Posterior cingulate gyrus (tissue), 11 donors: ENCODE measurements at regions of chr13 and their contacts with region 1.

Region 1: DNA sequence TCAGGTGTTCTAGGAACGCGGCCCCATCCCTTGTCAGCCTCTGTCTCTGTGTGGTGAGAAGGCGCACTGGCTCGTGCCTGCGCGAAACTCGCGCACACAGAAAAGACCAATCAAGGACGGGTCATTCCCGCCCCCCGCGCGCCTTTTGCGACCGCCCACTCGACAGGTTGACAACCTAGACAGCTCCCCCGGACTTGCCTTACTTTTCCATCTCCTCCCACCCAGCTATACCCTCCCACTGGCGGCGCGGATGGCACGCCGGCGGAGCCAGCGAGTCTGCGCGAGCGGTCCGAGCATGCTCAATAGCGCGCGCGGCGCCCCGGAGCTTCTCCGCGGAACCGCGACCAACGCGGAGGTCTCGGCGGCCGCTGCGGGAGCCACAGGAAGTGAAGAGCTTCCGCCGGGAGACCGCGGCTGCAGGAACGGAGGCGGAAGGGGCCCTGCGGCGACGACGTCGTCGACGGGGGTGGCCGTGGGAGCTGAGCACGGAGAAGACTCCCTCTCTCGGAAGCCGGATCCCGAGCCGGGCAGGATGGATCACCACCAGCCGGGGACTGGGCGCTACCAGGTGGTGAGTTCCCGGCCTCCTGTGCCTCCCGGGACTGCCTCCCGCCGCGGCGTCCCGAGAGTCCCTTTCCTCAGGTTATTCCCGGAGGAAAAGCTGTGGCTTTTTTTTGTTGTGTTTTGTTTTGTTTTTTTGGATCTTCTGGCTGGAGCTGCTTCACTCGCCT is at the start of gene NDFIP2:
- DNase-seq: peak; percentile 80 to 97 (median 82)

Region 2: GRCh38 chr13:79056706-79057105 is 424.4 kb before region 1 on chr13:
- intact Hi-C with region 1: no loop called
- DNase-seq: no peak

Region 3: GRCh38 chr13:79405829-79406596 is 75.1 kb before region 1 on chr13 and contains the start of gene RBM26:
- intact Hi-C with region 1: loop called (anchors 5 kb)
- DNase-seq: peak; percentile 81 to 98 (median 88)

Region 4: DNA sequence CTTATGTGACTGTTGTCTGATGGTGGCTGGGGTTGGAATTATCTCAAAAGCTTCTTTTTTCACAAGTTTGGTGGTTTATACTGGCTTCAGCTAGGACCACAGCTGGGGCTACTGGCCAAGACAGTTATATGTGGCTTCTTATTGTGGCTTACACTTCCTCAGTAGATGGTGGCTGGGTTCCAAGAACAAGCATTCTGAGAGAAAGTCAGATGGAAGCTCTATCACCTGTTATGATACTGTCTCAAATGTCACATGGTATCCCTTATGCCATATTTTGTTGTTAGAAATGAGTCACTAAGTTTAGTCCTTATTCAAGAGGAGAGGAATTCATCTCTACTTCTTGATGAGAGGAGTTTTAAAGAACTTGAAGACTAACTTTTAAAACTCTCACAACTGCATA is 41.5 kb after region 1 on chr13:
- intact Hi-C with region 1: loop called (anchors 5 kb)
- DNase-seq: no peak